Activated T-helper 2 cell treated with anti-CD3 and anti-CD28 coated beads, Interferon-gamma antibody, Interleukin-2, Interleukin-4, amounts not matched to agents 10 μg/mL and 5 μg/mL and 100 μg/mL, durations not matched to agents 14 hours and 24 hours and 36 hours (primary cell): ENCODE measurements at regions of chr16 and their contacts with region 1.

Region 1: GRCh38 chr16:75110637-75111513 is 5.7 kb downstream of the LDHD start:
- DNase-seq: peak; percentile 75
- H3K4me3 Mint-ChIP-seq: peak overlapping the region; percentile 64
- H3K27ac Mint-ChIP-seq: peak overlapping the region; percentile 85
- H3K4me1 Mint-ChIP-seq: peaks cover 42% of the 10 kb centered on the region
- H3K27me3 Mint-ChIP-seq: no peaks in the 10 kb centered on the region

Region 2: DNA sequence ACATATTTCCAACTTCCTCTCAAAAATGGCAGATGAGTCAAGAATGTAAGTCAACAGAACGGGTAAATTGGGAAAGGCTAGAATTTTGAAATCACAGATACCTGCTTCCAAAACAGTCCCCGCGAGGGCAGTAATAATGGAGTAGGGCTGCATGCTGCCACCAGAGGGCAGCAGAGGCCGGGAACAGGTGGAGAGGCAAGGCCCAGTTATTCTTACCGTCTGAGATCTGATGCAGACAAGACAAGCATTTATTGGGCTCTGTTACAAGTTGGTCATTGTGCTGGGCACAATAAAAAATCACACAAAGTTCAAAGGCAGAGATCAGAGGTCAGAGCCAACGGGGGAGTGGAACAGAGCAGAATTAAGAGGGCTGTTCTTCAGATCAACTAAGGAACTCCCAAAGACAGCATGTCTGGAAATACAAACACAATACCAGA is 401.4 kb before region 1 on chr16:
- intact Hi-C with region 1: loop called (anchors 10 kb)
- DNase-seq: peak; percentile 68
- H3K4me3 Mint-ChIP-seq: no peak overlapping the region
- H3K27ac Mint-ChIP-seq: no peak overlapping the region
- H3K4me1 Mint-ChIP-seq: peaks cover 11% of the 10 kb centered on the region
- H3K27me3 Mint-ChIP-seq: peaks cover 4% of the 10 kb centered on the region

Region 3: GRCh38 chr16:74936902-74937560 is 173.8 kb before region 1 on chr16:
- intact Hi-C with region 1: loop called (anchors 2 kb)
- DNase-seq: no peak
- H3K4me3 Mint-ChIP-seq: no peak overlapping the region
- H3K27ac Mint-ChIP-seq: peak overlapping the region; percentile 50
- H3K4me1 Mint-ChIP-seq: peaks cover 6% of the 10 kb centered on the region
- H3K27me3 Mint-ChIP-seq: no peaks in the 10 kb centered on the region

Region 4: DNA sequence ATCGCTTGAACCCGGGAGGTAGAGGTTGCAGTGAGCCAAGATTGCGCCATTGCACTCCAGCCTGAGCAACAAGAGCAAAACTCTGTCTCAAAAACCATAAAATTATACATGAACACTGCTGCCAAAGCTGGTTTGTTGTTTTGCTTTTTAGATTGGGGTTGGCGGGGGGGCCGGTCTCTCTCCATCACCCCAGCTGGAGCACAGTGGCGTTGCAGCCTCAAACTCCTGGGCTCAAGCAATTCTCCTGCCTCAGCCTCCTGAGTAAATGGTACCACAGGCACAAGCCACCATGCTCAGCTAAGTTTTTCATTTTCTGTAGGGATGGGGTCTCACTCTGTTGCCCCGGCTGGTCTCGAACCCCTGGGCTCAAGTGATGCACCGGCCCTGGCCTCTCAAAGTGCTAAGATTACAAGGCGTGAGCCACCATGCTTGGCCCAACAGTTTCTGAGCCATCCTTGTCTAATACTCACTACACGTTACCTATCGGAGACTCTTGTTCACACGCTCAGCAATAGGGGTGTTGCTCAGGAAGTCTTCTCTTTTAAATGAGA is 137.6 kb before region 1 on chr16:
- intact Hi-C with region 1: no loop called
- DNase-seq: no peak
- H3K4me3 Mint-ChIP-seq: no peak overlapping the region
- H3K27ac Mint-ChIP-seq: no peak overlapping the region
- H3K4me1 Mint-ChIP-seq: peaks cover 3% of the 10 kb centered on the region
- H3K27me3 Mint-ChIP-seq: no peaks in the 10 kb centered on the region

Region 5: GRCh38 chr16:74998481-74999218 is 112.2 kb before region 1 on chr16 and contains the start of gene ZNRF1:
- intact Hi-C with region 1: loop called (anchors 1 kb)
- DNase-seq: peak; percentile 67
- H3K4me3 Mint-ChIP-seq: peak within 1 kb of the TSS; percentile 86
- H3K27ac Mint-ChIP-seq: peak within 1 kb of the TSS; percentile 80
- H3K4me1 Mint-ChIP-seq: peaks cover 39% of the 10 kb centered on the region
- H3K27me3 Mint-ChIP-seq: peaks cover 16% of the 10 kb centered on the region
- total RNA-seq, gene ZNRF1: 34.8 and 36.6 TPM in 2 replicates

Region 6: GRCh38 chr16:75099756-75100602 is 10.9 kb before region 1 on chr16:
- intact Hi-C with region 1: loop called (anchors 1 kb)
- DNase-seq: peak; percentile 37
- H3K4me3 Mint-ChIP-seq: peak overlapping the region; percentile 41
- H3K27ac Mint-ChIP-seq: peak overlapping the region; percentile 88
- H3K4me1 Mint-ChIP-seq: peaks cover 50% of the 10 kb centered on the region
- H3K27me3 Mint-ChIP-seq: no peaks in the 10 kb centered on the region